ENCODE measurements at regions of chr6 and their contacts with region 1.

Region 1: GRCh38 chr6:47413752-47414422 is 63.7 kb upstream of the CD2AP start:
- DNase-seq: peak; percentile 82
- H3K4me3 ChIP-seq: peak overlapping the region; percentile 64
- H3K27ac ChIP-seq: peak overlapping the region; percentile 52
- H3K4me1 ChIP-seq: peaks cover 23% of the 10 kb centered on the region
- CTCF ChIP-seq: peak; percentile 99

Region 2: GRCh38 chr6:46972531-46972930 is 441.4 kb before region 1 on chr6:
- CTCF ChIA-PET with region 1: no interaction called
- POLR2A ChIA-PET with region 1: no interaction called
- intact Hi-C with region 1: no loop called
- DNase-seq: no peak
- H3K4me3 ChIP-seq: no peak overlapping the region
- H3K27ac ChIP-seq: no peak overlapping the region
- H3K4me1 ChIP-seq: no peaks in the 10 kb centered on the region
- CTCF ChIP-seq: no peak

Region 3: GRCh38 chr6:47009566-47009965 is 404.3 kb before region 1 on chr6:
- CTCF ChIA-PET with region 1: no interaction called
- POLR2A ChIA-PET with region 1: no interaction called
- intact Hi-C with region 1: no loop called
- DNase-seq: no peak
- H3K4me3 ChIP-seq: no peak overlapping the region
- H3K27ac ChIP-seq: no peak overlapping the region
- H3K4me1 ChIP-seq: no peaks in the 10 kb centered on the region
- CTCF ChIP-seq: peak; percentile 30; the same call in 1 of the 2 replicates

Region 4: DNA sequence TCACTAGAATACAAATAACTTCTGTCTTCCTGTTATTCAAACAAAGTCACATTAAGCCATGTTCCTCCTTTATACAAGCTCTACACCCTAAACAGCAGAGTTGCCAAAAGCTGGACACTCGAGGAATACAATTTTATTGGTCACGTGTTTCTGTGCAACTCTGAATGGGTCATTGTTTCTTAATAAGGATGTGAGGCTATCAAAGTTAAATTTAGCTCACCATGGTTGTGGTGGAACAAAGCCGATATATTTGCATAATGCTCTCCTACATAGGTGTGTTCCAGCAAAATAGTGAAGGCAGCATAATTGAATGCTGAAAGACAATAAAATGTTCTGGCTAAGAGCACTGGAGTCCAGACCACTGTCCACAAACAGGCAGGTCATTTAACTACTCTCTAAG is 26.8 kb after region 1 on chr6:
- CTCF ChIA-PET with region 1: no interaction called
- POLR2A ChIA-PET with region 1: interaction called, 9 read pairs
- intact Hi-C with region 1: loop called (anchors 1 kb)
- DNase-seq: peak; percentile 72
- H3K4me3 ChIP-seq: peak overlapping the region; percentile 34
- H3K27ac ChIP-seq: peak overlapping the region; percentile 33
- H3K4me1 ChIP-seq: peaks cover 55% of the 10 kb centered on the region
- CTCF ChIP-seq: no peak

Region 5: DNA sequence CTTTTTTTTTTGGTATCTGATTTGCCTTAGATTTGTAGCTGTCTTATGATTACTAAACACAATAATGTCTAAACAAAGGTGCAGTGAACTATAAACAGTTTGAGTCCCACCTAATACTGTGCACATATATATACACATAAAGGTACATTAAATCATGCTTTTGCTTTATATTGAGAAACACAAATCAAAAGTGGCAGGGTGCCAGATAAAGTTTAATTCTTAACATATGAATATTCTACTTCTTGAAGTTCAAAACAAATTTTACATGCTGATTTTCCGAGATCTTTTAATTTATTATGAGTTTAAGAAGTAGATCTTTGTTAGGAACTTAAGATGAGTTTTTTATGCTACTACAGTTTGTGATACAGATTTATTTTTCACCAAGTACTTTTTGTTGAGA is 191.6 kb after region 1 on chr6:
- CTCF ChIA-PET with region 1: no interaction called
- POLR2A ChIA-PET with region 1: interaction called, 3 read pairs
- intact Hi-C with region 1: loop called (anchors 5 kb)
- DNase-seq: no peak
- H3K4me3 ChIP-seq: no peak overlapping the region
- H3K27ac ChIP-seq: no peak overlapping the region
- H3K4me1 ChIP-seq: no peaks in the 10 kb centered on the region
- CTCF ChIP-seq: no peak

Region 6: GRCh38 chr6:47733879-47734558 is 320.1 kb after region 1 on chr6:
- CTCF ChIA-PET with region 1: no interaction called
- POLR2A ChIA-PET with region 1: interaction called, 3 read pairs
- intact Hi-C with region 1: loop called (anchors 1 kb)
- DNase-seq: peak; percentile 56
- H3K4me3 ChIP-seq: no peak overlapping the region
- H3K27ac ChIP-seq: no peak overlapping the region
- H3K4me1 ChIP-seq: no peaks in the 10 kb centered on the region
- CTCF ChIP-seq: peak; percentile 79

Measured in OCI-LY7 (cell line).